H1 (cell line): ENCODE measurements at regions of chr12 and their contacts with region 1.

Region 1: GRCh38 chr12:56007564-56008559 is 10.8 kb downstream of the SUOX start:
- DNase-seq: peak in 1 of 2 experiments; percentile 94
- H3K4me3 ChIP-seq: peak overlapping the region; percentile 52 to 90 (median 83)
- H3K27ac ChIP-seq: peak overlapping the region; percentile 62
- H3K4me1 ChIP-seq: peaks cover 0 to 4% (median 2%) of the 10 kb centered on the region in 4 experiments; a peak in 3 of 7 replicates
- H3K27me3 ChIP-seq: no peaks in the 10 kb centered on the region
- CTCF ChIP-seq: no peak
- EP300 ChIP-seq: no peak
- POLR2A ChIP-seq: peak; percentile 63
- RAD21 ChIP-seq: no peak

Region 2: DNA sequence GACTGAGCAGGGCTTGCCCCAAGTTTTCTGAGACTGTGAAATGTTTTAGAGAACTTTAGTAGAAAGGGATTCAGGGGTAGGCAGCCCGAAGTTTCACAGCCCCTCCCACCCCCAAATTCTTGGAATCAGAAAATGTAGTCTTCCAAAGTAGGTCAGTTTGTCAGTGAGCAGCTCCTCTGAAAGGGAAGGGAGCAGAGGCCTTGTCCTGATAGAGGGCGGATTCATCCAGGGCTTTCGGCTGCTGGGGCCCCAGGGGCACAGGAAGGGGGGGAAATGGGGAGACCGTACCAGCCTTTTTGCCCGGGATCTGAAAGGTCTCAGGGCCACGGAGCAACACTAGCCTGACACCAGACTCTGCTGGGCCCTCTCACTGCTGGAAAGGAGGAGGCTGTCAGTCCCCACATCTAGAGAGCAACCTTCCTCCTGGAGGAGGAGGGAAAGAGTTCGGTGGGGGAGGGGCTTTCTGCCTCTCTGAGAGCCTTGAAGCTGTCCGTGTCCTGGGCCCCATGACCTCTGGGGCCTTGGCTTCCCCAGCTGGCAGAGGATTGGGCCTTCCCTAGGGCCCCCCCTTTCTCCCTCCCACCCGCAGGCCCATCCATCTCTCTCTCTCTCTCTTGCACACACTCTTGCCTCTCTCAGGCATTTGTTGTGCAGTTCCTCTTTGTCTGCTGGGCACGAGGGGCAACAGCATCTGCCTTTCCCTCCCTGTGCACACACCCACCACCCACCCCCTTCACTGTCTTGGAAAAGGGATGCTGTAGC is 12.7 kb after region 1 on chr12 and contains the start of gene IKZF4:
- CTCF ChIA-PET with region 1: interaction called, 8 read pairs
- POLR2A ChIA-PET with region 1: interaction called, 82 read pairs
- DNase-seq: peak in 1 of 2 experiments; percentile 81
- H3K4me3 ChIP-seq: peak within 1 kb of the TSS; percentile 37 to 60 (median 52)
- H3K27ac ChIP-seq: peak within 1 kb of the TSS; percentile 73
- H3K4me1 ChIP-seq: peaks cover 8 to 25% (median 16%) of the 10 kb centered on the region in 4 experiments
- H3K27me3 ChIP-seq: no peaks in the 10 kb centered on the region
- CTCF ChIP-seq: no peak
- EP300 ChIP-seq: no peak
- POLR2A ChIP-seq: peak in 1 of 2 experiments; percentile 69; a peak in 2 of 3 replicates
- RAD21 ChIP-seq: no peak
- total RNA-seq, gene IKZF4: 12.5 and 13.3 TPM in 2 replicates

Region 3: GRCh38 chr12:56029666-56030293 is 21.9 kb after region 1 on chr12:
- CTCF ChIA-PET with region 1: interaction called, 20 read pairs
- POLR2A ChIA-PET with region 1: interaction called, 7 read pairs
- DNase-seq: peak in 1 of 2 experiments; percentile 52
- H3K4me3 ChIP-seq: no peak overlapping the region
- H3K27ac ChIP-seq: no peak overlapping the region
- H3K4me1 ChIP-seq: no peaks in the 10 kb centered on the region
- H3K27me3 ChIP-seq: no peaks in the 10 kb centered on the region
- CTCF ChIP-seq: peak; percentile 37 to 74 (median 66)
- EP300 ChIP-seq: no peak
- POLR2A ChIP-seq: no peak
- RAD21 ChIP-seq: peak; percentile 59 to 68

Region 4: DNA sequence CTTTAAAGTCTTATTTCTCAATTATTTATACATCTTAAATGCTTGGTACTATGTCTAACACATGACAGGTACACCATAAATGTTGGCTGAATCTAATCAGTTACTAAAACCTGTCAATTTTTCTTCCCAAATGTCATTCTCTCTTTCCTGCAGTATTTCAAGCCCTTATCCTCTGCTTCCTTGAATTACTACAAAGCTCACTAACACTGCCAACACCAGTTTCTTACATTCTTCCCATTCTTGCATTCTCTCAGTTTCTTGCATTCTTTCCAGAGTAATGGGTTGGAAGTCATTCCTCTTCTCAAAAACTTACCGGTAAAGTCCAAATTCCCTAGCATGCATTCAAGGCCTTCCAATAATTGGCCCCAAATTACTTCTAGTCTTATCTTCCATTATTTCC is 191.0 kb after region 1 on chr12:
- CTCF ChIA-PET with region 1: no interaction called
- POLR2A ChIA-PET with region 1: no interaction called
- DNase-seq: no peak
- H3K4me3 ChIP-seq: no peak overlapping the region
- H3K27ac ChIP-seq: no peak overlapping the region
- H3K4me1 ChIP-seq: no peaks in the 10 kb centered on the region
- H3K27me3 ChIP-seq: no peaks in the 10 kb centered on the region
- CTCF ChIP-seq: no peak
- EP300 ChIP-seq: no peak
- POLR2A ChIP-seq: no peak
- RAD21 ChIP-seq: no peak